T-cell (primary cell): ENCODE measurements at regions of chr11 and their contacts with region 1.

Region 1: GRCh38 chr11:75532200-75533048 is 6.7 kb upstream of the GDPD5 start:
- DNase-seq: peak; percentile 51 to 90 (median 76)
- ATAC-seq: peak; percentile 74 to 93 (median 89)
- H3K4me3 ChIP-seq: no peak overlapping the region
- H3K4me3 Mint-ChIP-seq: no peak overlapping the region
- H3K27ac ChIP-seq: no peak overlapping the region
- H3K27ac Mint-ChIP-seq: no peak overlapping the region
- H3K4me1 ChIP-seq: peaks cover 3 to 44% of the 10 kb centered on the region in 2 experiments
- H3K4me1 Mint-ChIP-seq: peaks cover 28 to 54% (median 33%) of the 10 kb centered on the region in 3 donors
- H3K27me3 ChIP-seq: no peaks in the 10 kb centered on the region
- H3K27me3 Mint-ChIP-seq: peaks cover 0 to under 1% of the 10 kb centered on the region in 2 donors

Region 2: DNA sequence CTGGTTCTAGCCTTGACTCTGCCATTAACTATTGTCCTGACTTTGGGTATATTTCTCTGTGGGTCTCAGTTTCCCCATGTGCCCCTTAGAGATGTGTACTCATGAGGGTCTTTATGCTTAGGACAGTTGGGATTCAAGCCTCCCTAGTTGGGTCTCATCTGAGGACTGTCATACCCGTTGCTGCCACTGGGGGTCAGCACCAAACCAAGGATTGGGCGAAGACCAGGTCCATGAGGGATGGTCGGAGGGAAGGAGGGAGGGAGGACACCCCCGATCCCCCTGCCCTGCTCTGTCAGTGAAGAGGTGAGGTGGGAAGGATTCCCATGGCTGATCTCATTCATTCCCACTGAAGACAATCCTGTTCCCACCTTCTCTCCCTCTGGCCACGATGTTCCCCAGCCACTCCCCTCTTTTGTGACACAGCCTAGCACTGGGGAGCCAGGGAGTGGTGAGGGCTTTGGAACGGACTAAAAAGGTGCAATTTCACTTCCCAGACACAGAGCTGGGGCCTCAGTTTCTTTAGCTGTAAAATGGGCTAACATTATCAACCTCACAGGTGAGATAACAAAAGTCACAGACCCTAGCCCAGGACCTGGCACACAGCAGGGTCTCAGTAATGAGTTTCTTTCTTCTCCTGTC is 87.0 kb before region 1 on chr11:
- CTCF ChIA-PET with region 1: interaction called, 42 to 64 read pairs
- POLR2A ChIA-PET with region 1: no interaction called
- DNase-seq: peak; percentile 29 to 82 (median 62)
- ATAC-seq: peak; percentile 73 to 87 (median 82)
- H3K4me3 ChIP-seq: no peak overlapping the region
- H3K4me3 Mint-ChIP-seq: no peak overlapping the region
- H3K27ac ChIP-seq: no peak overlapping the region
- H3K27ac Mint-ChIP-seq: peak overlapping the region in 1 of 2 donors; percentile 59
- H3K4me1 ChIP-seq: peaks cover 0 to 3% of the 10 kb centered on the region in 2 experiments
- H3K4me1 Mint-ChIP-seq: no peaks in the 10 kb centered on the region
- H3K27me3 ChIP-seq: peaks cover 0 to 6% of the 10 kb centered on the region in 2 experiments
- H3K27me3 Mint-ChIP-seq: no peaks in the 10 kb centered on the region